ENCODE measurements at regions of chr11 and their contacts with region 1.

Region 1: GRCh38 chr11:128630367-128631230 is 43.2 kb upstream of the ETS1 start:
- DNase-seq: peak; percentile 86 to 94 (median 88)
- ATAC-seq: peak; percentile 74 to 93 (median 88)
- H3K4me3 ChIP-seq: no peak overlapping the region
- H3K27ac ChIP-seq: peak overlapping the region in 3 of 12 donors; percentile 12 to 80 (median 38)
- H3K4me1 ChIP-seq: peaks cover 0 to 48% (median 10%) of the 10 kb centered on the region in 12 donors
- H3K27me3 ChIP-seq: no peaks in the 10 kb centered on the region
- CTCF ChIP-seq: peak; percentile 82 to 94 (median 90)
- POLR2A ChIP-seq: no peak

Region 2: DNA sequence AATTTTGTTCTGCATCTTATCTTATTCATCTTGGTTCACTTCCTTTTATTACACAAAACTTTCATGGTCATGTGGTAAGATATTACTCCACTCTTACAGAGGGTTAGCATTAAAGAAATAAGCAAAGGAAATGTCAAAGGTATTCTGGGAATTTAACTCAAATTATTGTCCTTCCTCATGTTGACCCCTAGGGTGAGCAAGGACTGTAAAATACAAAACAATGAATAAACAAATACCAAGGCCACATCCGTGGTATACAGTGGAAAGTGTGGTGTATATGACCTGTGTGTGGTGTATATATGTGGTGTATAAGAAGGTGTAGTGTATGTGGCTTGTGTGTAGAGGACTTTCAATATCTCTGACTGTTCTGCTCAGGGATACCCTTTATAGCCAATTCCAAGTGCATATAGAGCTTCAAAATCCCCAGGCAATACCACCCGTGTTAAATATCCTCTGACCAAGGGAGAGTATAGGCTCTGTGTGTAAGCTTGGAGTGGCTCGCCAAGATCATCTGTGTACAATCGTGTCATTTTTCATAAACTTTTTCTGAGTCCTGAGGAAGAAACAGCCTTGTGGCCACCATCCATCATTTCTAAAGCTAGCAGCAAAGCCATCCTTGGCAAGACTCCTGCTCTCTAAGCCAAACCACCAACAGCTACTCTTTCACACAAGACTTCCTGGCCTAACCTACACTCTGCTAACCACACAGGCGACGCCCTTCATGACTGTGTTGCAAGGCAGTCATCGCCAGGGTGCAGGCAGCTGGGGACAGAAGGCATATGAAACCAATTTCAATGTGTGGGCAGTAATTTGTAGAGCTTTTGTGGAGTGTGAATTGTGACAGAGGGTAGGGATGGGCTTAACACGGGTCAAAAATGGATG is 591.2 kb before region 1 on chr11:
- intact Hi-C with region 1: loop called in 3 of 10 experiments (anchors 10 kb)
- DNase-seq: peak in 4 of 5 donors; percentile 23 to 74 (median 32)
- ATAC-seq: peak in 3 of 4 donors; percentile 66 to 92 (median 78)
- H3K4me3 ChIP-seq: peak overlapping the region in 1 of 12 donors; percentile 19
- H3K27ac ChIP-seq: peak overlapping the region in 1 of 12 donors; percentile 72
- H3K4me1 ChIP-seq: peaks cover 0 to 39% (median 0%) of the 10 kb centered on the region in 12 donors
- H3K27me3 ChIP-seq: peaks cover 0 to 15% (median 0%) of the 10 kb centered on the region in 9 donors
- CTCF ChIP-seq: peak in 2 of 12 donors; percentile 7 to 16
- POLR2A ChIP-seq: no peak

Region 3: DNA sequence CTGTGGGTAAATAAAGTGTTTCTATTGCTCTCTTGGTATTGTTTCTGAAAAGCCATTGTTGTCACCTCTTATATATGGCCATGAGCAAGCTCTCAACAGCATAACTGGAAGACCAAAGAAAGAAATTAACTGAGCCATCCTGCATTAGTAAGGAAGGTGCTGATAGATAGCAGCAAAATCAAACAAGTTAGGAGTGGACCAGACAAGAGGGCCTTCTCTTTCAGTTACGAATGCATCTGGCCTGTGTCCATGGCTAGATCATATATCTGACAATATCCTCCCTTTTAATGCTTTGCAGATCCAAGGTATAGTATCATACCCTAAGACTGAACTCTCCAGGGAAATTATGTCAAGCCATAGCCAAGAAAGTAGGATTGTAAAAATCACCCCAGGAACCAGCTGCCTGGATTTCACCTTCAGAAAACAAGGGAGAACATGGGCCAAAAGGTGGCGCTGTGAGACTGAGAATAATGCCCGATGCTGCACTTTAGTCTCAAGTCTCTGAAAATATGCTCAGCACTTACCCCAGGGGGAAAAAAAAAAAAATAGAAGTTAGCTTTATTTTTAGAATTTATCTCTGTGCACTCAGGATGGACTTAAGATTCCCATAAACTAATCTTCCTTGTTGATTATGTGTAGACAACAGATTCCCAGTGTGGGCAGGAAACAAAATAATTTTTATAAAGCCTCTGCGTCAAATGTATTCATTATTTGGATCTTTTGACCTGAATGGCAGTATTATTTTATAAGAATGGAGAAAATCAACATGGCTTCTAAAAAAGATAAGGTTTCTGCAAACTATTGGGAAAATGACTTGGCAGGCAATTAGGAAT is 458.3 kb before region 1 on chr11:
- intact Hi-C with region 1: loop called (anchors 1 to 5 kb)
- DNase-seq: peak; percentile 74 to 83 (median 80)
- ATAC-seq: peak in 3 of 4 donors; percentile 77 to 85 (median 84)
- H3K4me3 ChIP-seq: no peak overlapping the region
- H3K27ac ChIP-seq: peak overlapping the region in 1 of 12 donors; percentile 19
- H3K4me1 ChIP-seq: peaks cover 0 to 8% (median 0%) of the 10 kb centered on the region in 12 donors
- H3K27me3 ChIP-seq: peaks cover 0 to 7% (median 0%) of the 10 kb centered on the region in 9 donors
- CTCF ChIP-seq: peak; percentile 50 to 91 (median 80)
- POLR2A ChIP-seq: no peak

Region 4: DNA sequence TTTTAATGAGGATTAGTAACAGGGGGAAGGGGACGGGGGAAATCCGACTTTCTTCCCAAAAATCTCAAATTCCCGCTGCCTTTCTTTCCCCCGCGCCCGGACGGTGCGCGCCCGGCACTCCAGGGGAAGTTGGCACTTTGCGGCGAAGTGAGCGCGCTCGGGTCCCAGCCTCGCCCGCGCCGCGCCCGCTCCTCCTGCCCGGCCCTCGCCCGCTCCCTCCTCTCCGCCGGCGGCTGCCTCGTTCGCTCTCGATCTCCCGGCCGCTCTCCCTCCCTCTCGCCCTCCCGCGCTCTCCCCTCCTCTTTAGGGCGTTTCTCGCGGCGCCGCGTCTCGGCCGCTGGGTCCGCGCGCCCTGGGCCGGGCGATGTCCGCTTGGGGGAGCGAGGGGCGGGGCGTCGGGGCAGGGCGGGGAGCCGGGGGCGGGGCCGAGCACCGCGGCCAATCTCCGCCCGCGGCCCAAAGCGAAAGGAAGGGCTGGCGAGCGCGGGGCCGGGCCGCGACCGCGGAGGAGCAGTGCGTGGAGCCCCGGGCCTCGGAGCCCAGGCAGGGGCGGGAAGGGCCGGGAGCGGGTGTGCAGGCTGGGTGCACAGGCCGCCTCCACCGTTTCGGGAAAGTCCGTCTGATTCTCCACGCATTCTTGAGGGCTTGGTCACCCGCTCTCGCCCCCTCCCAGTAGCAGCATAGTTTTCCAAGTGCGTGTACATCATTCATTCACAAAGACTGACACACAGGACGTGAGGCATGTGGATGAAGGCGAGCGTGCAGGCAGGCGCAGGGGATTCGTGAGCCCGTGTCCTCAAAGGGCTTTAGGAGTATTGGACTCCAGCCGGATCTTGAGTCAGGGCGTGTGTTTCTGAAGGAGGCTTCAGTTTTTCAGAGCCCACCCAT is 108.3 kb before region 1 on chr11:
- intact Hi-C with region 1: loop called in 1 of 10 experiments (anchors 1 kb)
- DNase-seq: peak; percentile 95 to 97 (median 96)
- ATAC-seq: peak; percentile 93 to 99 (median 96)
- H3K4me3 ChIP-seq: peak overlapping the region; percentile 63 to 93 (median 83)
- H3K27ac ChIP-seq: peak overlapping the region; percentile 94 to 98 (median 96)
- H3K4me1 ChIP-seq: peaks cover 8 to 74% (median 42%) of the 10 kb centered on the region in 12 donors
- H3K27me3 ChIP-seq: no peaks in the 10 kb centered on the region
- CTCF ChIP-seq: peak in 1 of 12 donors; percentile 5
- POLR2A ChIP-seq: peak; percentile 79 to 97

Region 5: DNA sequence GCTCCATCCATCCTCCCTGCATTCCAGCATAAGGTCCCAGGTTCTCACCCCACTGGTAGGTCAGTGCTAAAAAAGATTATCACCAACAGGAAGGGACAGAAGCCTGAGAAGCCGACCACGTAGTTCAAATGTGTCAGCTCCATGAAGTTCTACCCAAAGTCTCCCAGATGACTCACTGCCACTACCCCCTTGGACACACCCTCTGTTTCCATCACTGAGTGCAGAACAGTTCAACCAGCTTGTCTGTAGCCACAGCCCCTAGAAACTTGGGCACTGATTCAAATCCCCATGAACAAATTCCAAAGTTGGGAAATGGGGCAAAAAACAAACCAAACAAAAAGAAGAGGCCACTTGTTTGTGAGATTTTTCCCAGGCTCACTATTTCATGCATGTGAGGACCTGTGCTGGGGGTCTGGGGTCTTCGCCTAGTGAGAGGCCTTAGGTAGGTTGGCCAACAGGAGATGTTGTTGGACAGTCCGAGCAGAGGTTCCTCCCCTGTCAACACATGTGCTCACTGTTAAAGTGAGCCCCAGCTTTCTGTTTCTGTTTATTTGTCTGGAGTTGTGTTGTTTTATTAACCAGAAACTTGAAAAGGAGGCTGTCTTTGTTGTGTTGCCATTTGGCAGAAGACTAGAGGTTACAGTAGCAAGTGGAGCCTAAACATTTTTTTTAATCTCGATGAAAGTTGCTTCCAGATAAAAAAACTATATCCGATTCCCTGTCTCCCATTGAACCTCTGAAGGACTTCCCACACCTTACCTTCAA is 39.1 kb after region 1 on chr11:
- intact Hi-C with region 1: no loop called
- DNase-seq: no peak
- ATAC-seq: no peak
- H3K4me3 ChIP-seq: no peak overlapping the region
- H3K27ac ChIP-seq: no peak overlapping the region
- H3K4me1 ChIP-seq: no peaks in the 10 kb centered on the region
- H3K27me3 ChIP-seq: peaks cover 0 to 3% (median 0%) of the 10 kb centered on the region in 9 donors
- CTCF ChIP-seq: no peak
- POLR2A ChIP-seq: no peak

Region 6: DNA sequence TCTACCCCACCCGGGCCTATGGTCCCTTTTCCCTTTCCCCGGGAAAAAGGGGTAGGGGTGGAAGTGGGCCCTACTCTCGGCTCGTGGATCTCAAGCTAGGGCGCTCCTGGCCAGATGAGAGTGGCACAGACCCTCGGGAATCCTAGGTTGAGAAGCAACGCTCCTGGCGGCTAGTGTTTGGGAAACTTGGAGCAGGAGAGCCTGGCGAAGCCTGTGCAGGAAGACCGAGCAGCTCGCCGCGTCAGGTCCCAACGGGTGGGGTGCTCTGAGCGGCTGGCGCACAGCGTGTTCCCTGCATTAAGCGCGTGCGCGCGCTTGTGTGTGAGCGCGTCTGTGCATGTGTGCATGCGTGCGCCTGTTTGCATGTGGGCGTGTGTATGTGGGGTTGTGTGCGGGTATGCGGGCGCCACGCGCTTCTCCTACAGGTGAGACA is 56.2 kb after region 1 on chr11:
- intact Hi-C with region 1: loop called in 1 of 10 experiments (anchors 5 kb)
- DNase-seq: peak; percentile 31 to 81 (median 64)
- ATAC-seq: peak; percentile 68 to 80 (median 78)
- H3K4me3 ChIP-seq: peak overlapping the region; percentile 8 to 60 (median 46)
- H3K27ac ChIP-seq: no peak overlapping the region
- H3K4me1 ChIP-seq: peaks cover 5 to 65% (median 40%) of the 10 kb centered on the region in 12 donors
- H3K27me3 ChIP-seq: peaks cover 6 to 75% (median 49%) of the 10 kb centered on the region in 9 donors
- CTCF ChIP-seq: no peak
- POLR2A ChIP-seq: no peak